ENCODE measurements at regions of chr16 and their contacts with region 1.

Region 1: GRCh38 chr16:29926005-29926710 is at the start of gene KCTD13:
- DNase-seq: peak; percentile 89
- H3K4me3 ChIP-seq: peak within 1 kb of the TSS; percentile 97
- H3K27ac ChIP-seq: peak within 1 kb of the TSS; percentile 84
- H3K4me1 ChIP-seq: peaks cover 15% of the 10 kb centered on the region
- H3K27me3 ChIP-seq: no peaks in the 10 kb centered on the region
- CTCF ChIP-seq: no peak
- total RNA-seq, gene KCTD13: 32.4 and 33.3 TPM in 2 replicates

Region 2: DNA sequence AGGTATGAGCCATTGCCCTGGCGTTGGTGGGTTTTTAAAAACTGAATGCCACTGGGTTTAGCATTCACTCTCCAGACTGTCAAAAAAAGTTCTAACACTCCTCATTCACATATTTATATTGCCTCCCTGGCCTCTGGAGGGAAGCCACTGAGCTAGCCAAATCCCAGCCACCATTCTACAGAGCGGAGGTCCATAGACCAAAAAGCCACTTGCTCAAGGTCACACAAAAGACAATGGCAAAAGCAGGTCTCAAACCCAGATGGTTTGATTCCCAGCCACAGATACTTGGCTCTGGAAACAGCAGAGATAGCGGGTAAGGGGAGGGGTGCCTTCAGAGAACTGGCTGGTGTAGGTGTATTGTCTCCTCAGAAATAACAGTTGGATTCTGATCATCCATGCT is 45.1 kb before region 1 on chr16:
- CTCF ChIA-PET with region 1: no interaction called
- POLR2A ChIA-PET with region 1: interaction called, 13 read pairs
- intact Hi-C with region 1: no loop called
- DNase-seq: no peak
- H3K4me3 ChIP-seq: no peak overlapping the region
- H3K27ac ChIP-seq: no peak overlapping the region
- H3K4me1 ChIP-seq: peaks cover 14% of the 10 kb centered on the region
- H3K27me3 ChIP-seq: no peaks in the 10 kb centered on the region
- CTCF ChIP-seq: no peak

Region 3: GRCh38 chr16:29973384-29974246 is 47.5 kb after region 1 on chr16 and contains the start of gene TAOK2:
- CTCF ChIA-PET with region 1: no interaction called
- POLR2A ChIA-PET with region 1: interaction called, 3 read pairs
- intact Hi-C with region 1: loop called (anchors 5 kb)
- DNase-seq: peak; percentile 99
- H3K4me3 ChIP-seq: peak within 1 kb of the TSS; percentile 84
- H3K27ac ChIP-seq: peak within 1 kb of the TSS; percentile 81
- H3K4me1 ChIP-seq: peaks cover 16% of the 10 kb centered on the region
- H3K27me3 ChIP-seq: no peaks in the 10 kb centered on the region
- CTCF ChIP-seq: no peak
- total RNA-seq, gene TAOK2: 49.9 and 50.2 TPM in 2 replicates